CD8-positive, alpha-beta T cell (primary cell): ENCODE measurements at regions of chr4 and their contacts with region 1.

Region 1: GRCh38 chr4:186201535-186202230 is 10.3 kb downstream of the CYP4V2 start:
- DNase-seq: peak; percentile 14 to 76 (median 63)
- ATAC-seq: peak; percentile 91
- H3K4me3 ChIP-seq: no peak overlapping the region
- H3K4me3 Mint-ChIP-seq: peak overlapping the region; percentile 10
- H3K27ac ChIP-seq: no peak overlapping the region
- H3K27ac Mint-ChIP-seq: peak overlapping the region; percentile 73
- H3K4me1 ChIP-seq: no peaks in the 10 kb centered on the region
- H3K4me1 Mint-ChIP-seq: peaks cover 16% of the 10 kb centered on the region
- H3K27me3 ChIP-seq: no peaks in the 10 kb centered on the region
- H3K27me3 Mint-ChIP-seq: no peaks in the 10 kb centered on the region
- CTCF ChIP-seq: peak; percentile 76

Region 2: DNA sequence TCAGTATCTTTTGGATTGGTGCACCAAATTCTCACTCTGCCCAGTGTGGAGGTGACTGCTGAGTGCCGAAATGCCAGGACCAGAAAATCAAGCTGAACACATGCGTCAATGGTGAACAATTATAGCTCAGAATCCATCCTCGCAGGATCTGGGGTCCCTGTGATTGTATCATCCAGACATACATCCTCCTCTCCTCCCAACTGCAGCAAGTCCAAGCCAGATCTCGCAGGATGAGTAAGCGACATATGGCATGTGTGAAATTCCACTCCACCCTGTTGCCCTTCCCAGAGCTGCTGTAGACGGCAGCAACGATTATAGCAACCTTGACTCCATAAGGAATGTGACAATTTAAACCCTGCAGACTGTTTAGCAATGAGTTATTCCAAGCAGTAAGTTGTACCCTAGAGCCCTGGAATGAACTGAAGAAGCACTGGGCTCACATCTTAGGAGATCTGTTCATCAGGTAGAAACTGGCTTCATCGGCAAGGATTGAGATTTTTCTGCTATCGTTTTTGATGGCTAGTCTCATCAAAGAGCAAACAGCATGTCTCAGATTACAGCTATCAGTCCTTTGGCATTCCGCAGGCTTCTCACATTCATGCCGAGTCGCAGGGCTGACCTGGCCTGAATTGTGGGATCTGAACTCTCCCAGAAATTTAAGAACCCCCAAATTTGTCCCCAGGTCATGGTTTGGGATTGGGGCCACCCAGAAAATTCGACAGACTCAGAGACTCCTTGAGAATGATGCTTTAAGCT is 354.2 kb before region 1 on chr4:
- CTCF ChIA-PET with region 1: no interaction called
- POLR2A ChIA-PET with region 1: no interaction called
- intact Hi-C with region 1: no loop called
- DNase-seq: no peak
- ATAC-seq: no peak
- H3K4me3 ChIP-seq: no peak overlapping the region
- H3K4me3 Mint-ChIP-seq: no peak overlapping the region
- H3K27ac ChIP-seq: no peak overlapping the region
- H3K27ac Mint-ChIP-seq: no peak overlapping the region
- H3K4me1 ChIP-seq: no peaks in the 10 kb centered on the region
- H3K4me1 Mint-ChIP-seq: no peaks in the 10 kb centered on the region
- H3K27me3 ChIP-seq: no peaks in the 10 kb centered on the region
- H3K27me3 Mint-ChIP-seq: no peaks in the 10 kb centered on the region
- CTCF ChIP-seq: no peak

Region 3: GRCh38 chr4:186067757-186068385 is 133.8 kb before region 1 on chr4:
- CTCF ChIA-PET with region 1: interaction called, 5 read pairs
- POLR2A ChIA-PET with region 1: no interaction called
- intact Hi-C with region 1: loop called (anchors 2 kb)
- DNase-seq: peak in 7 of 9 experiments; percentile 9 to 64 (median 27)
- ATAC-seq: peak; percentile 64
- H3K4me3 ChIP-seq: peak overlapping the region; percentile 46 to 69
- H3K4me3 Mint-ChIP-seq: peak overlapping the region; percentile 83
- H3K27ac ChIP-seq: no peak overlapping the region
- H3K27ac Mint-ChIP-seq: no peak overlapping the region
- H3K4me1 ChIP-seq: peaks cover 11% of the 10 kb centered on the region
- H3K4me1 Mint-ChIP-seq: peaks cover 25% of the 10 kb centered on the region
- H3K27me3 ChIP-seq: no peaks in the 10 kb centered on the region
- H3K27me3 Mint-ChIP-seq: peaks cover 11% of the 10 kb centered on the region
- CTCF ChIP-seq: no peak

Region 4: DNA sequence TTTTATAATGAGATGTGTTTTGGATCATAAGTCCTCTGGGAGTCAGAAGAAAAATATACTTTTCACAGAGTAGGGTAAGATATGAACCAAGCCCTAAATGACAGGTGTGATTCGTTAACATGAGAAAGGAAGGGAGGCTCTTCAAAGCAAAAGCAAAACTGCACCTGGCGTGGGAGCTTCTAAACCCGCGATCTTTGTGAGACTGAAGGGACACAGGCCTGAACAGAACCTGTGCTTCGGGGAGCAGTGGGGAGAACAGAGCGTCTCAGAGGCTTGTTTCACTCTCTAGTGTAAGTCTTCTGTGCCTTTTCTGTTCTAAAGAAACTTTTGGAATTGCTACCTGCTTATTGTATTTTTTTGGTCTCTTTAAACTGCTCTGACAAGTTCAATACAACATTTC is 40.5 kb before region 1 on chr4:
- CTCF ChIA-PET with region 1: no interaction called
- POLR2A ChIA-PET with region 1: no interaction called
- intact Hi-C with region 1: loop called in 1 of 2 experiments (anchors 5 kb)
- DNase-seq: peak in 2 of 9 experiments; percentile 20 to 27
- ATAC-seq: peak; percentile 51
- H3K4me3 ChIP-seq: no peak overlapping the region
- H3K4me3 Mint-ChIP-seq: peak overlapping the region; percentile 66
- H3K27ac ChIP-seq: no peak overlapping the region
- H3K27ac Mint-ChIP-seq: peak overlapping the region; percentile 16
- H3K4me1 ChIP-seq: no peaks in the 10 kb centered on the region
- H3K4me1 Mint-ChIP-seq: peaks cover 5% of the 10 kb centered on the region
- H3K27me3 ChIP-seq: peaks cover 0 to 8% of the 10 kb centered on the region in 2 experiments
- H3K27me3 Mint-ChIP-seq: peaks cover 5% of the 10 kb centered on the region
- CTCF ChIP-seq: no peak

Region 5: DNA sequence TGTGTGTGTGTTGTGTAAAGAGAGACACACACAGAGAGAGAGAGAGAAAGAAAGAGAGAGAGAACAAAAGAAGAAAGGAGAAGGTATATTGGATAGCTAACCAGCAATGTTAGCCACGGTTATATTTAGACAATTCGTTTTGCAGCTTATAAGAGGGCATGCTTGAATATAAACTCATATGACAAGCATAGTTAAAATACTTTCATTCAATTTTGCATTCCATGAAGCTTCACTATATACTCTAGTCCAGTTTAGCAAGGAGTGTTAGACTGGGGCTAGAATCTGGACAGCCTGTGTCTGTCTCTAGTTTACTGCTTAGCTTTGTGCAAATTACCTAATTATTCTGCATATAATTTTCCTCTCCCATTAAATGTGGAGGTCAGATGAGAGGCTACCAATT is 1267.9 kb after region 1 on chr4:
- CTCF ChIA-PET with region 1: no interaction called
- POLR2A ChIA-PET with region 1: no interaction called
- intact Hi-C with region 1: no loop called
- DNase-seq: no peak
- ATAC-seq: no peak
- H3K4me3 ChIP-seq: no peak overlapping the region
- H3K4me3 Mint-ChIP-seq: no peak overlapping the region
- H3K27ac ChIP-seq: no peak overlapping the region
- H3K27ac Mint-ChIP-seq: no peak overlapping the region
- H3K4me1 ChIP-seq: no peaks in the 10 kb centered on the region
- H3K4me1 Mint-ChIP-seq: no peaks in the 10 kb centered on the region
- H3K27me3 ChIP-seq: no peaks in the 10 kb centered on the region
- H3K27me3 Mint-ChIP-seq: no peaks in the 10 kb centered on the region
- CTCF ChIP-seq: no peak